ENCODE measurements at regions of chr9 and their contacts with region 1.

Region 1: GRCh38 chr9:96725576-96725975 is 52.3 kb downstream of the ZNF510 start:
- DNase-seq: no peak
- ATAC-seq: no peak
- H3K4me3 ChIP-seq: no peak overlapping the region
- H3K27ac ChIP-seq: no peak overlapping the region
- H3K4me1 ChIP-seq: no peaks in the 10 kb centered on the region
- H3K27me3 ChIP-seq: no peaks in the 10 kb centered on the region
- CTCF ChIP-seq: no peak
- POLR2A ChIP-seq: no peak
- RAD21 ChIP-seq: no peak

Region 2: DNA sequence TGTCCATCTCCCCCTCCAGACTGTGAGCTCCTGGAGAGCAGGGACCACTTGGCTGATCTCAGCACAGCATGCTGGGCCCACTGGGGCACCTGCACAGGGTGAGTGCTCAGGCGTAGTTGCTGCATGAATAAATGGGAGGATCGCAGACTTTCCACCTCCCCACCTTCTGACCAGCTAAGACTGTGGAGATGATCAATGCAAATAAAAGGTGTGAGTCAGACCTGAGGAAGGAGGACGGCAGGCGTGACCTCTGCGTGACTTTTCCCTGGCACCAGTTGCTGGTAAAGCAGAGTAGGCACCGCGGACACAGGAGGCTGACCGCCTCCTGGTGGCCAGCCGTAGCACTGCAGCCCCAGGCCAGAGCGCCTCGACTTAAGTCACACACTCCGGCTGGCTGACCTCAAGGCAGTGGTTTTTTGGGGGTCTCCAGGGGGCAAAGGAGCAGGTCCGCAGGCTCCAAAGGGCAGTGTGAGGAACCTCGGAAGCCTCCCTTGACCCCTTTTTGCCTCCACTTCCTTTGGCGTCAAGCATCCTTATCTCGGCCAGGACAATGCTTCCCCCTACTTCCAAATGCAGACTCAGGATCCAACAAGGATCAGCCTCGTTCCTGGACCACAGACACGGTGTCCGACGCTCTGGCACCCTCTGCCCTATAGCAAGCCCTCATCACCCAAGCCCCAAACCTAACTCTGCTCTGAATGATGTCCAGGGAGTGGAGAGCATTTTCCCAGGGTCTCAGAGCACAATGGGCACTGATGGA is 673.6 kb after region 1 on chr9:
- CTCF ChIA-PET with region 1: no interaction called
- POLR2A ChIA-PET with region 1: no interaction called
- RAD21 ChIA-PET with region 1: no interaction called
- intact Hi-C with region 1: loop called (anchors 5 kb)
- DNase-seq: peak; percentile 73
- ATAC-seq: peak; percentile 90
- H3K4me3 ChIP-seq: peak overlapping the region in 1 of 2 experiments; percentile 30; a peak in 2 of 4 replicates
- H3K27ac ChIP-seq: no peak overlapping the region; the same call in 1 of the 2 replicates
- H3K4me1 ChIP-seq: peaks cover 4 to 10% of the 10 kb centered on the region in 2 experiments; a peak in 3 of 4 replicates
- H3K27me3 ChIP-seq: no peaks in the 10 kb centered on the region
- CTCF ChIP-seq: peak; percentile 76 to 98 (median 97)
- POLR2A ChIP-seq: no peak
- RAD21 ChIP-seq: peak; percentile 84

Measured in HCT116 (cell line).